A673 (cell line): ENCODE measurements at regions of chr15 and their contacts with region 1.

Region 1: GRCh38 chr15:68700455-68701123 is 120.1 kb downstream of the ANP32A start:
- DNase-seq: peak; percentile 87
- H3K4me3 ChIP-seq: peak overlapping the region; percentile 6
- H3K27ac ChIP-seq: peak overlapping the region; percentile 69
- H3K4me1 ChIP-seq: peaks cover 18% of the 10 kb centered on the region
- H3K27me3 ChIP-seq: no peaks in the 10 kb centered on the region
- CTCF ChIP-seq: no peak

Region 2: GRCh38 chr15:68550481-68551295 is 149.9 kb before region 1 on chr15:
- CTCF ChIA-PET with region 1: interaction called, 11 read pairs
- POLR2A ChIA-PET with region 1: no interaction called
- intact Hi-C with region 1: no loop called
- DNase-seq: peak; percentile 62
- H3K4me3 ChIP-seq: no peak overlapping the region
- H3K27ac ChIP-seq: no peak overlapping the region
- H3K4me1 ChIP-seq: no peaks in the 10 kb centered on the region
- H3K27me3 ChIP-seq: peaks cover 4% of the 10 kb centered on the region
- CTCF ChIP-seq: peak; percentile 95